Activated CD4-positive, alpha-beta memory T cell treated with anti-CD3 and anti-CD28 coated beads, Interleukin-2, amount 10 ng/mL, durations not matched to agents 7 days and 5 days (primary cell): ENCODE measurements at regions of chr7 and their contacts with region 1.

Region 1: GRCh38 chr7:154996752-154997151 is 6.2 kb downstream of the PAXIP1 start:
- DNase-seq: no peak
- H3K4me3 Mint-ChIP-seq: no peak overlapping the region
- H3K27ac Mint-ChIP-seq: no peak overlapping the region
- H3K4me1 Mint-ChIP-seq: peaks cover 7% of the 10 kb centered on the region
- H3K27me3 Mint-ChIP-seq: no peaks in the 10 kb centered on the region

Region 2: DNA sequence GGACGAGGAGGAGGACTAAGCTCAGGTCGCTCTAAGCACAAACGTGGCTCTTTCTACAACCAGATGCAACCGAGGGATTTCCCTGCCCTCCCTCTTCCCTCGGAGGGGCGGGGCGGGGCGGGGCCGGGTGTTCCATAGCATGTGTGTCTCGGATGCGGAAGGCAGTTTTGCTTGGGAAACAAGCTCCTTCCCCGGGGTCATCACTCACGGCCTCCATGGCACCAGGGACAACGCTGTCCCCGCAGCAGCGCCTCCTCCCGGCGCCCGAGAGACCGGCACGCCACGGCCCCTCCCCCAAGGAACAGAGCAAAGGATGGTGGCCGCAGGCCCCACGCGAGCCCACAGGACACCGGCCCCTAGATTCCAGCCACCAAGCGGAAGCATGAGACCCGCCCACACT is 104.3 kb before region 1 on chr7:
- CTCF ChIA-PET with region 1: no interaction called
- POLR2A ChIA-PET with region 1: no interaction called
- DNase-seq: no peak
- H3K4me3 Mint-ChIP-seq: no peak overlapping the region
- H3K27ac Mint-ChIP-seq: no peak overlapping the region
- H3K4me1 Mint-ChIP-seq: no peaks in the 10 kb centered on the region
- H3K27me3 Mint-ChIP-seq: no peaks in the 10 kb centered on the region

Region 3: GRCh38 chr7:155009570-155010157 is 12.9 kb after region 1 on chr7:
- CTCF ChIA-PET with region 1: interaction called, 18 read pairs
- POLR2A ChIA-PET with region 1: no interaction called
- DNase-seq: peak; percentile 36
- H3K4me3 Mint-ChIP-seq: no peak overlapping the region
- H3K27ac Mint-ChIP-seq: no peak overlapping the region
- H3K4me1 Mint-ChIP-seq: peaks cover 3% of the 10 kb centered on the region
- H3K27me3 Mint-ChIP-seq: no peaks in the 10 kb centered on the region